Kidney (tissue), 22 donors: ENCODE measurements at regions of chr2 and their contacts with region 1.

Region 1: GRCh38 chr2:105235388-105236054 is 6.0 kb upstream of the GPR45 start:
- DNase-seq: peak; percentile 80 to 95 (median 86)
- H3K4me3 ChIP-seq: no peak overlapping the region
- H3K27ac ChIP-seq: no peak overlapping the region
- H3K4me1 ChIP-seq: peaks cover 0 to 2% (median 0%) of the 10 kb centered on the region in 3 donors
- H3K27me3 ChIP-seq: no peaks in the 10 kb centered on the region
- CTCF ChIP-seq: peak; percentile 70

Region 2: GRCh38 chr2:105114551-105114950 is 121.0 kb before region 1 on chr2:
- intact Hi-C with region 1: loop called (anchors 5 kb)
- DNase-seq: peak in 2 of 5 donors; percentile 72 to 83
- H3K4me3 ChIP-seq: no peak overlapping the region
- H3K27ac ChIP-seq: no peak overlapping the region
- H3K4me1 ChIP-seq: no peaks in the 10 kb centered on the region
- H3K27me3 ChIP-seq: no peaks in the 10 kb centered on the region
- CTCF ChIP-seq: peak; percentile 73